ENCODE measurements at regions of chr13 and their contacts with region 1.

Region 1: GRCh38 chr13:32246468-32246867 is 68.7 kb downstream of the ZAR1L start:
- DNase-seq: peak; percentile 85
- H3K4me3 ChIP-seq: no peak overlapping the region
- H3K4me3 Mint-ChIP-seq: peak overlapping the region; percentile 25
- H3K27ac Mint-ChIP-seq: peak overlapping the region; percentile 58
- H3K4me1 ChIP-seq: peaks cover 30% of the 10 kb centered on the region
- H3K4me1 Mint-ChIP-seq: peaks cover 25% of the 10 kb centered on the region
- H3K27me3 ChIP-seq: no peaks in the 10 kb centered on the region
- H3K27me3 Mint-ChIP-seq: no peaks in the 10 kb centered on the region
- CTCF ChIP-seq: peak; percentile 76 to 88

Region 2: DNA sequence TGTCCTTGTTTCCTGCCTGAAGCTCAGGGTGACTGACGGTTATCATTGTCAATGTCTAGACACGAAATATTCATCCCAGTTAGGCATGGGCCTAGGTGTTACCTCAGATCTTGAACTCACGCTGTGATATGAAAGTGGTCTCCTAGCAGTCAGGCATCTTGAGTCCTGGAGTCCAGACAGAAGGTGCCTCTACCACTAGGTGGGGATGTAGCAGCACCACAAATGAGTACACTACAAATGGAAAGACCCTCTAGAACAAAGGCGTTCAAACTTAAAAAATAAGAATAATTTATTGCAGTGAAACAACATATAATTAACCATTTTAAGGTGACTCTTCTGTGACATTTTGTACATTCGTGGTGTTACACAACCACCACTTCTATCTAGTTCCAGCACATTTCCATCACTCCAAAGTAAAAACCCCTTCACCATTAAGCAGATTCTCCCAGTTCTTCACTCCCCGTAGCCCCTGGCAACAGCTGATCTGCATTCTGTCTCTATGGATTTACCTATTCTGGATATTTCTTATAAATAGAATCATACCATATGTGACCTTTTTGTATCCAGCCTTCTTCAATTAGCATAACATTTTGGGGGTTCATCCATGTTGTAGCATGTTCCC is 226.7 kb before region 1 on chr13:
- CTCF ChIA-PET with region 1: no interaction called
- POLR2A ChIA-PET with region 1: no interaction called
- intact Hi-C with region 1: loop called (anchors 1 kb)
- DNase-seq: peak; percentile 68 to 75
- H3K4me3 ChIP-seq: no peak overlapping the region
- H3K4me3 Mint-ChIP-seq: no peak overlapping the region
- H3K27ac Mint-ChIP-seq: no peak overlapping the region
- H3K4me1 ChIP-seq: no peaks in the 10 kb centered on the region
- H3K4me1 Mint-ChIP-seq: peaks cover 9% of the 10 kb centered on the region
- H3K27me3 ChIP-seq: no peaks in the 10 kb centered on the region
- H3K27me3 Mint-ChIP-seq: no peaks in the 10 kb centered on the region
- CTCF ChIP-seq: peak; percentile 87 to 95

Region 3: DNA sequence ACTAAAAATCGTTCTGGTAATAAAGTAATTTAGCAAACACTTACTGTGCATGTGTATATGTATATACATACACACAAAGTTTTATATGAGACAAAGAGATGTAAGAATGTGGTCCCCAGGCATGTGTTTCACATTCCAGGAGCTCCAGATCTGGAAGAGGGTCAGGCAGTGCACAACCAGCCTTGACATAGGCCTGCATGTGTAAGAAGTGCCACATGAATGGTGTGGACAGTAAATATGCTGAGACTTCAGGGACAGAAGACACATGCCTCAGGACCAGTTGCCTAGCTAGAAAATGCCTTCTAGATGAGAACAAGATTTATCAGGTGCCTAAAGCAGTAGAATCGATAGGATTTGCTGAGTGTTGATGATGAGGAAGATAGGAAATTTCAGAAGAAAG is 138.5 kb before region 1 on chr13:
- CTCF ChIA-PET with region 1: no interaction called
- POLR2A ChIA-PET with region 1: no interaction called
- intact Hi-C with region 1: loop called (anchors 1 kb)
- DNase-seq: no peak
- H3K4me3 ChIP-seq: no peak overlapping the region
- H3K4me3 Mint-ChIP-seq: no peak overlapping the region
- H3K27ac Mint-ChIP-seq: no peak overlapping the region
- H3K4me1 ChIP-seq: no peaks in the 10 kb centered on the region
- H3K4me1 Mint-ChIP-seq: no peaks in the 10 kb centered on the region
- H3K27me3 ChIP-seq: no peaks in the 10 kb centered on the region
- H3K27me3 Mint-ChIP-seq: no peaks in the 10 kb centered on the region
- CTCF ChIP-seq: no peak

Region 4: DNA sequence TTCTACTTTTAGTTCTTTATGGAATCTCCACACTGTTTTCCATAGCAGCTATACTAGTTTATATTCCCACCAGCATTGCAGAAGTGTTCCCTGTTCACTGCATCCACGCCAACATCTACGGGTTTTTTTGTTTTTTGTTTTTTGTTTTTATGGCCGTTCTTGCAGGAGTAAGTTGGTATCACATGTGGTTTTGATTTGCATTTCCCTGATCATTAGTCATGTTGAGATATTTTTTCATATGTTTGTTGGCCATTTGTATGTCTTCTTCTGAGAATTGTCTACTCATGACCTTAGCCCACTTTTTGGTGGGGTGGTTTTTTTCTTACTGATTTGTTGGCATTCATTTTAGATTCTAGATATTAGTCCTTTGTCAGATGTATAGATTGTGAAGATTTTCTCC is 125.2 kb before region 1 on chr13:
- CTCF ChIA-PET with region 1: no interaction called
- POLR2A ChIA-PET with region 1: no interaction called
- intact Hi-C with region 1: no loop called
- DNase-seq: no peak
- H3K4me3 ChIP-seq: no peak overlapping the region
- H3K4me3 Mint-ChIP-seq: no peak overlapping the region
- H3K27ac Mint-ChIP-seq: no peak overlapping the region
- H3K4me1 ChIP-seq: no peaks in the 10 kb centered on the region
- H3K4me1 Mint-ChIP-seq: no peaks in the 10 kb centered on the region
- H3K27me3 ChIP-seq: no peaks in the 10 kb centered on the region
- H3K27me3 Mint-ChIP-seq: no peaks in the 10 kb centered on the region
- CTCF ChIP-seq: no peak

Region 5: DNA sequence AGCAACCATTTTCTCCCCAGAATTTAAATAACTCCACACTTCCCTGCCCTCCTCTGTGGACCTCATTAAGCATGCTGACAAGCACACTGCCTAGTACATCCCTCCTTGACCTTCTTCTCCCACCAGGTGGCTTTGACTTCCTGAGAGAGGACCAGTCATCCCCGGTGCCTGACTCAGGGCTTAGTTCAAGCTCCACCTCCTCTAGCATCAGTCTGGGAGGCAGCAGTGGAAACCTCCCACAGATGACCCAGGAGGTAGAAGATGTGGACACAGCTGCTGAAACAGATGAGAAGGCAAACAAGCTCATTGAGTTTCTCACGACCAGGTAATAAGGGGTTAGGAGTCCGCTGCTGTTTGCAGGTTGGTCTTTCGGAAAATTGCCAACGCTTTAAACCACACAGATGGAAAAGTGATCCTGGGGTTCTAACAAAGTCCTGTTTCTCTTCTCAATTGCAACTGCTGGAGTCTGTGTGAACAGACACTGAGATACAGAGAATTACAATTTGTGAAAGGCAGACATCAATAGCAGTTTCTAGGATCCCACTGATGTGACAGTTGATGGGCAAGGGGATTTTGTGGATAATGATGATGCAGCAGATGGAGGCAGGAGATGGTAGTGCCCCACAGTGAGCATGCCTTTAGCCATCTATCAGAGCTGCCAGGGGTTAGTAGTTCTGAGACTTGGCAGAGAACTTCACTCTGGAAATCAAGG is 18.0 kb before region 1 on chr13:
- CTCF ChIA-PET with region 1: interaction called, 6 read pairs
- POLR2A ChIA-PET with region 1: no interaction called
- intact Hi-C with region 1: loop called (anchors 1 kb)
- DNase-seq: peak; percentile 81 to 85
- H3K4me3 ChIP-seq: no peak overlapping the region
- H3K4me3 Mint-ChIP-seq: peak overlapping the region; percentile 6
- H3K27ac Mint-ChIP-seq: peak overlapping the region; percentile 14
- H3K4me1 ChIP-seq: peaks cover 46% of the 10 kb centered on the region
- H3K4me1 Mint-ChIP-seq: peaks cover 26% of the 10 kb centered on the region
- H3K27me3 ChIP-seq: no peaks in the 10 kb centered on the region
- H3K27me3 Mint-ChIP-seq: no peaks in the 10 kb centered on the region
- CTCF ChIP-seq: peak; percentile 10 to 39

Region 6: DNA sequence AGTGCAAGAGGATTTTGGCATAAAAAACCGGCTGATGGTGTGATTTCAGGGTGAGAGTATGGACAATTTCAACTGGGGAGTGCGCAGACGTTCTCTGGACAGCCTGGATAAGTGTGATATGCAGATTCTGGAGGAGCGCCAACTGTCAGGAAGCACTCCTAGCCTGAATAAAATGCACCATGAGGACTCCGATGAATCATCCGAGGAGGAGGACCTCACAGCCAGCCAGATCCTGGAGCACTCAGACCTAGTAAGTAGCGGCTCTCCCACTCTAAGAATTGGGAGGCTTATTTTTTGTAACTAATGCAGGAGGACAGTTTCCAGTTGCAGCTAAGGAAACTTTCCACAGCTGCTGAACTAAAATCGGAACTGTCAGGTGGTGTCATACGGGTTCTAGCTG is 15.1 kb after region 1 on chr13:
- CTCF ChIA-PET with region 1: interaction called, 18 read pairs
- POLR2A ChIA-PET with region 1: no interaction called
- intact Hi-C with region 1: no loop called
- DNase-seq: no peak
- H3K4me3 ChIP-seq: no peak overlapping the region
- H3K4me3 Mint-ChIP-seq: peak overlapping the region; percentile 41
- H3K27ac Mint-ChIP-seq: peak overlapping the region; percentile 77
- H3K4me1 ChIP-seq: peaks cover 84% of the 10 kb centered on the region
- H3K4me1 Mint-ChIP-seq: peaks cover 41% of the 10 kb centered on the region
- H3K27me3 ChIP-seq: no peaks in the 10 kb centered on the region
- H3K27me3 Mint-ChIP-seq: no peaks in the 10 kb centered on the region
- CTCF ChIP-seq: no peak

Region 7: DNA sequence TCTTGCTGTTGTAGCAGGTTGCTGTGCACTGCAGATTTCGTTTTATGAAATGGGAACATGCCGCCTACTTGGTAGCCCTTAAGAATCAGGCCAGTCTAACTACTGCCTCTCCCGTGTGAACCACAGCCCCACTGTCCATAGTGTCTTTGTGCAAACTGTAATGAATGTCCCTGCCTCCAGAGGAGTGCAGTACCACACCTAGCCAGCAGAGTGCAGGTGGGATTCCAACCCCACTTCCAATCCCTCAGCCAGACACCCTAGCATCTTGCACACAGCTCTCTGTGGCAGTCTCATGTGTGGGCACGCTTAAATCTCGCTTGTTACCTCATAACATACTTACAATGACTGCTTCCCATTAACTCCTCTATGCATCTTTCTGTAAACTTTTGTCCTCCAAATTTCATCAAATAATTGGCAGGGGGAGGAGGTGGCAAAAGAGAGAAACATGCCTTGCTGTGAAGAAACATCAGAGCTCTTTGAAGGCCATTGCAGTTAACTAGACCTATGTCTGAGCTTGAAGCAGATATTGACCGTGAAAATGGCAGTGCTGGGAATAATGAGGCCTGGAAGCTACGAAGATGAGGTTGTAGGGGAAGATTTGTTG is 21.5 kb after region 1 on chr13:
- CTCF ChIA-PET with region 1: no interaction called
- POLR2A ChIA-PET with region 1: no interaction called
- intact Hi-C with region 1: loop called (anchors 1 kb)
- DNase-seq: peak; percentile 77 to 79
- H3K4me3 ChIP-seq: no peak overlapping the region
- H3K4me3 Mint-ChIP-seq: no peak overlapping the region
- H3K27ac Mint-ChIP-seq: peak overlapping the region; percentile 27
- H3K4me1 ChIP-seq: peaks cover 30% of the 10 kb centered on the region
- H3K4me1 Mint-ChIP-seq: peaks cover 15% of the 10 kb centered on the region
- H3K27me3 ChIP-seq: no peaks in the 10 kb centered on the region
- H3K27me3 Mint-ChIP-seq: no peaks in the 10 kb centered on the region
- CTCF ChIP-seq: peak; percentile 87 to 92

Region 8: DNA sequence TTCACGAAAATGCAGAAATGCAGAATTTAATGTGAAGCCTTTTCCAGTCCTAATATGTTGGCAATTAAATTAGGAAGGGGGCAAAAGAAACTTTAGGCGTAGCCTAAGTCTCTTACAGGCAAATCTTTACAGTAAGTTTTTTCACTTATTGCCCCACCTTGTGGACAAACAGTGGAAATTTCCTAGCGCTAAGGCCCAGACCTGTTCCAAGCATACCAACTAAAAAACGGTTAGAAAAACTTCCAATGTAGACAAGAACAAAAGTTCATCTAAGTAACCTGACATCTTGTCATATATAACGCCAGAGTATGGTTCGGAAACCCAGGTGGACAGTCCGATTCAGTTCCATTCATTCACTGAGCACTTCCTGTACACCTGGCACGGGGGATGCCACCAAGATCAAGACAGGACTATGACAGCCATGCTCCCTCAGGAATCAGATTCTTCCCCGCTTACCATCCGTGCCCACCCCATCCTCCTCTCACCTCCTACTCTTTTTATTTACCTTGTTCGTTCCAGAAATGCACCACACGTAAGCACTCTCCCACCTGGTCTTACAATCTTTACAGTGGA is 63.8 kb after region 1 on chr13:
- CTCF ChIA-PET with region 1: interaction called, 3 read pairs
- POLR2A ChIA-PET with region 1: interaction called, 3 read pairs
- intact Hi-C with region 1: loop called (anchors 1 kb)
- DNase-seq: peak in 1 of 2 experiments; percentile 62
- H3K4me3 ChIP-seq: no peak overlapping the region
- H3K4me3 Mint-ChIP-seq: no peak overlapping the region
- H3K27ac Mint-ChIP-seq: no peak overlapping the region
- H3K4me1 ChIP-seq: peaks cover 23% of the 10 kb centered on the region
- H3K4me1 Mint-ChIP-seq: peaks cover 6% of the 10 kb centered on the region
- H3K27me3 ChIP-seq: no peaks in the 10 kb centered on the region
- H3K27me3 Mint-ChIP-seq: no peaks in the 10 kb centered on the region
- CTCF ChIP-seq: peak; percentile 70 to 84

Region 9: GRCh38 chr13:32330441-32330840 is 84.0 kb after region 1 on chr13:
- CTCF ChIA-PET with region 1: no interaction called
- POLR2A ChIA-PET with region 1: no interaction called
- intact Hi-C with region 1: no loop called
- DNase-seq: no peak
- H3K4me3 ChIP-seq: no peak overlapping the region
- H3K4me3 Mint-ChIP-seq: no peak overlapping the region
- H3K27ac Mint-ChIP-seq: no peak overlapping the region
- H3K4me1 ChIP-seq: no peaks in the 10 kb centered on the region
- H3K4me1 Mint-ChIP-seq: no peaks in the 10 kb centered on the region
- H3K27me3 ChIP-seq: no peaks in the 10 kb centered on the region
- H3K27me3 Mint-ChIP-seq: no peaks in the 10 kb centered on the region
- CTCF ChIP-seq: no peak